Aorta (tissue), 5 donors: ENCODE measurements at regions of chr19 and their contacts with region 1.

Region 1: DNA sequence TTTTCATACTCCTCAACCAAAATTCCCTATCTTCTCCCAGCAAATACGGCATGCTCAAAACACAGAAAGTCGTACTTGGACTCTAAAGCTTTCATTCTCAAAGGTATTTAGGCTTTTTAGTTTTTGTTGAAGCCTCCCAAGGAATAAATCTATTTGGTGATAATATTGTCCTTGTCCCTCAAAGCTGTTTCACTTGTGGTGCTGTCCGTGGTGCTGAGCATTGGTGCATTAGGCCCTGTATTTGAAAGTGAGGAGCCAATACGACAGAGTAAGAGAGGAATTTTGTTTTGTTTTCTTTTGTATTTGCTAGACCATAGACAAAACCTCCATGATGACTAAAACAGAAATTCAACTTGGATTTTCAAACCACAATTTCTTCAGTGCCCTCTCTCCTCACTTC is 3.2 kb upstream of the LGALS13 start:
- DNase-seq: no peak
- ATAC-seq: no peak
- H3K4me3 ChIP-seq: no peak overlapping the region
- H3K27ac ChIP-seq: no peak overlapping the region
- H3K4me1 ChIP-seq: no peaks in the 10 kb centered on the region
- H3K27me3 ChIP-seq: no peaks in the 10 kb centered on the region

Region 2: DNA sequence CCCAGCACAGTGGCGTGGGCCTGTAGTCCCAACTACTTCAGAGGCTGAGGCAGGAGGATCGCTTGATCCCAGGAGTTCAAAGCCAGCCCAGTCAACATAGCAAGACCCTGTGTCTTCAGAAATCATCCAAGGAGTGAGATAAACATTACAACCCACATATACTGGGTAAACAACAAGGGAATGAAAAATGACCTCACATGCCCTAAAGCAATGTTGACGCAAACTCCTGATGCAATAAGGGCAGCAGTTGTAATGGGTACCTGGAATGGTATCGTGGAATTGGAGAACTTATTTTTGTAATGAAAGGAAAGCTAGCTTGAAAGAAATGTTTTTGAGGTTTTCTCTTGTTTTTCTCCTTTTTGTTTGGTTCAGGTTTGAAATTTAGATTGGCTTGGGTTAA is 32.1 kb after region 1 on chr19:
- intact Hi-C with region 1: loop called in 1 of 2 experiments (anchors 2 kb)
- DNase-seq: no peak
- ATAC-seq: no peak
- H3K4me3 ChIP-seq: no peak overlapping the region
- H3K27ac ChIP-seq: no peak overlapping the region
- H3K4me1 ChIP-seq: no peaks in the 10 kb centered on the region
- H3K27me3 ChIP-seq: no peaks in the 10 kb centered on the region